ENCODE measurements at regions of chr17 and their contacts with region 1.

Region 1: GRCh38 chr17:61201232-61201640 is 198.4 kb upstream of the TBX2 start:
- DNase-seq: peak; percentile 97
- H3K4me3 ChIP-seq: peak overlapping the region; percentile 21
- H3K27ac ChIP-seq: peak overlapping the region; percentile 77
- H3K27me3 ChIP-seq: no peaks in the 10 kb centered on the region
- CTCF ChIP-seq: no peak

Region 2: GRCh38 chr17:61048376-61049106 is 152.7 kb before region 1 on chr17:
- CTCF ChIA-PET with region 1: no interaction called
- POLR2A ChIA-PET with region 1: no interaction called
- DNase-seq: no peak
- H3K4me3 ChIP-seq: no peak overlapping the region
- H3K27ac ChIP-seq: no peak overlapping the region
- H3K27me3 ChIP-seq: no peaks in the 10 kb centered on the region
- CTCF ChIP-seq: no peak

Region 3: GRCh38 chr17:61117998-61118397 is 83.2 kb before region 1 on chr17:
- CTCF ChIA-PET with region 1: no interaction called
- POLR2A ChIA-PET with region 1: no interaction called
- DNase-seq: no peak
- H3K4me3 ChIP-seq: no peak overlapping the region
- H3K27ac ChIP-seq: no peak overlapping the region
- H3K27me3 ChIP-seq: no peaks in the 10 kb centered on the region
- CTCF ChIP-seq: no peak

Region 4: GRCh38 chr17:61217878-61218837 is 16.9 kb after region 1 on chr17:
- CTCF ChIA-PET with region 1: no interaction called
- POLR2A ChIA-PET with region 1: interaction called, 11 read pairs
- DNase-seq: peak; percentile 30
- H3K4me3 ChIP-seq: no peak overlapping the region
- H3K27ac ChIP-seq: peak overlapping the region; percentile 34
- H3K27me3 ChIP-seq: no peaks in the 10 kb centered on the region
- CTCF ChIP-seq: no peak

Region 5: GRCh38 chr17:61245706-61246135 is 44.5 kb after region 1 on chr17:
- CTCF ChIA-PET with region 1: interaction called, 11 read pairs
- POLR2A ChIA-PET with region 1: interaction called, 3 read pairs
- DNase-seq: no peak
- H3K4me3 ChIP-seq: no peak overlapping the region
- H3K27ac ChIP-seq: no peak overlapping the region
- H3K27me3 ChIP-seq: no peaks in the 10 kb centered on the region
- CTCF ChIP-seq: no peak

Region 6: DNA sequence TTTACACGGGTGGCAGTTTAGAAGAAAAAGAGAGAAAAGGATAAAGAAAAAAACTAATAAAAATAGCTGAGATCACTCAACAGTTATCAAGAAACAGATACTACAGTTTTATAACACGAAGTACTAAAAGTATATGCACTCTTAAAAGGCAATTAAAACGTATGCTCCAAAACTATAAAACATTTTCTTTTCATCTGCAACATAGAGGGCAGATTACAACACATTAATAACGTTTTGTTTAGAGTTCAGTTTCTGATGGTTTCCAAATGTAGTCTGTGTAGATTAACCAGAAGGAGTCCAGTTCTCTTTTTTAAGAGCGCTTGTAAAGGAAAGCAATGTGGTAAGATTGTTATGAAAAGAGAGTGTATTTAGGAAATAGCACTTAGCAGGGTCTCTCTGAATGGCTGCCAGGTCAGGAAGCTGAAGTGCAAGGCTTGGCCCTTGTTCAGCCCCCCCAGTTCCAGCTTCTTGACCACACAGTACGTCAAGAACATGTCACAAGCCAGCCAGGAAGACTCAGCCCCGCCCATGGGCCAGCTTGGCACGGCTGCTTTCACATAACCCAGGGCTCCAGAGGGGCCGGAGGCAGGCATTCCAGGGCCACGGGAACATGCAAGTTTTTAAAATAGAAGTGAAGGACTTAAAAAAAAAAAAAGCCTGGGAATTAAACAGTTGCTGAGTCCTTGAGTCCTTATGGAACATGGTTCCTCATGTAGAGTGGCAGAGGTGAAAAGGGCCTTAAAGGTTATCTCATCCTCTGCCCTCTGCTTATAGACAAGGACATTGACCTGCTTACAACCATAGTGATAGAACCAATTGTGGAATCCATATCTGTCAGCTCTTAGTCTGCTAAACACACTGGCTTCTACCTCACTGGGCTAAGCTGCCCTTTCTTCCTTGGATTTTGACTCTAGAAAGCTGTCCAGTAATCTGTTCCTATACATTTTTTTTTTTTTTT is 51.0 kb after region 1 on chr17:
- CTCF ChIA-PET with region 1: no interaction called
- POLR2A ChIA-PET with region 1: interaction called, 13 read pairs
- DNase-seq: peak; percentile 99
- H3K4me3 ChIP-seq: no peak overlapping the region
- H3K27ac ChIP-seq: peak overlapping the region; percentile 95
- H3K27me3 ChIP-seq: no peaks in the 10 kb centered on the region
- CTCF ChIP-seq: no peak

Region 7: GRCh38 chr17:61291451-61292285 is 90.4 kb after region 1 on chr17:
- CTCF ChIA-PET with region 1: no interaction called
- POLR2A ChIA-PET with region 1: interaction called, 11 read pairs
- DNase-seq: no peak
- H3K4me3 ChIP-seq: no peak overlapping the region
- H3K27ac ChIP-seq: peak overlapping the region; percentile 39
- H3K27me3 ChIP-seq: no peaks in the 10 kb centered on the region
- CTCF ChIP-seq: no peak

Region 8: GRCh38 chr17:61399131-61400057 is 198.2 kb after region 1 on chr17 and contains the start of gene TBX2:
- CTCF ChIA-PET with region 1: no interaction called
- POLR2A ChIA-PET with region 1: interaction called, 31 read pairs
- DNase-seq: peak; percentile 93
- H3K4me3 ChIP-seq: peak within 1 kb of the TSS; percentile 98
- H3K27ac ChIP-seq: peak within 1 kb of the TSS; percentile 90
- H3K27me3 ChIP-seq: no peaks in the 10 kb centered on the region
- CTCF ChIP-seq: no peak
- polyA plus RNA-seq, gene TBX2: 18.3 and 22.0 TPM in 2 replicates